ENCODE measurements at regions of chr5 and their contacts with region 1.

Region 1: GRCh38 chr5:76771705-76772405 is 47.0 kb upstream of the F2RL1 start:
- DNase-seq: no peak
- ATAC-seq: no peak
- H3K4me3 ChIP-seq: no peak overlapping the region
- H3K4me3 Mint-ChIP-seq: no peak overlapping the region
- H3K27ac ChIP-seq: no peak overlapping the region
- H3K27ac Mint-ChIP-seq: no peak overlapping the region
- H3K4me1 ChIP-seq: no peaks in the 10 kb centered on the region
- H3K4me1 Mint-ChIP-seq: peaks cover 3% of the 10 kb centered on the region
- H3K27me3 ChIP-seq: no peaks in the 10 kb centered on the region
- H3K27me3 Mint-ChIP-seq: no peaks in the 10 kb centered on the region
- CTCF ChIP-seq: no peak

Region 2: DNA sequence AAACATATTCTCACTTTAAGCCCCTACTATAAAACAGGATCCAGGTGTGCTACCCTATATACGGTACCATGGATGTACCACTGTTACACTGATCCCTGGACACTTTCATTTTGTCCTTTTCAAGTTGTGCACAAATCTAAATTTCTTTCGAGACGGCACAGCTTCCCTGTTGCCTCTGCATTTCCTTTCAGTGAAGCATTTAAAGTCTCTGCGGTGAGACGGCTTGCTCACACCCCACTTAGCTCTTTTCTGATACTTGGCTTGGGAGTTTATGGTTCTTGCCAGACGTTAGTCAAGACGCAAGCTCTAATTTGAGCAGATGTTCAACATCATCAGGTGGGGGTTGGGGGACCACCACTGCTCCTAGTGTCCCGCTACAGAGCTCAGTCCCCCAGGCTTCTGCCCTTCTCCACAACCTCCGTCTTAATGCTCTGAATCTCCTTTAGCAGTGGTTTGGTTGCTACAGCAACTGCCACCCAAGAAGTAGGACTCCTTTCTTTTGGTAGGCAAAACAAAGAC is 164.4 kb before region 1 on chr5:
- CTCF ChIA-PET with region 1: interaction called, 67 read pairs
- POLR2A ChIA-PET with region 1: no interaction called
- intact Hi-C with region 1: no loop called
- DNase-seq: peak in 2 of 9 experiments; percentile 12 to 13
- ATAC-seq: no peak
- H3K4me3 ChIP-seq: no peak overlapping the region
- H3K4me3 Mint-ChIP-seq: no peak overlapping the region
- H3K27ac ChIP-seq: no peak overlapping the region
- H3K27ac Mint-ChIP-seq: peak overlapping the region; percentile 34
- H3K4me1 ChIP-seq: no peaks in the 10 kb centered on the region
- H3K4me1 Mint-ChIP-seq: peaks cover 6% of the 10 kb centered on the region
- H3K27me3 ChIP-seq: no peaks in the 10 kb centered on the region
- H3K27me3 Mint-ChIP-seq: no peaks in the 10 kb centered on the region
- CTCF ChIP-seq: no peak

Region 3: DNA sequence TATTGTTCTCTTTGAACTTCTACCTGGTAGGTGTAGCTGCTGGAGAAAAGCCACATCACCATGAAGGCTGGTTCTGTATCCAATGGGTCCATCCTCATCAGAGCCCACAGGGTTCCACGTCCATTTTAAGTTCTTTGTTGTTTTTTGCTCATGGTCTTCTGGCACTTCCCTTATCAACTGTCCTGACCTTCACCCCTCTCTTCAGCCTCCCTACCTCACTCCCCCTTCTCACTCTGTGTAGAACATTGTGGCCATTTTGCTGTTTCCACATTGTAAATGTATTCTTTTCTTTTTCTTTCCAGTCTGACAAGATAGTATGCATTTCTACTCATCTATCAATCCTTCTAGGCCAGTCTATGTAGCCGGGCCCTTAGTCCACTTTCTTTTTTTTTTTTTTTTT is 104.4 kb before region 1 on chr5:
- CTCF ChIA-PET with region 1: interaction called, 12 read pairs
- POLR2A ChIA-PET with region 1: no interaction called
- intact Hi-C with region 1: no loop called
- DNase-seq: no peak
- ATAC-seq: no peak
- H3K4me3 ChIP-seq: no peak overlapping the region
- H3K4me3 Mint-ChIP-seq: no peak overlapping the region
- H3K27ac ChIP-seq: no peak overlapping the region
- H3K27ac Mint-ChIP-seq: no peak overlapping the region
- H3K4me1 ChIP-seq: no peaks in the 10 kb centered on the region
- H3K4me1 Mint-ChIP-seq: no peaks in the 10 kb centered on the region
- H3K27me3 ChIP-seq: no peaks in the 10 kb centered on the region
- H3K27me3 Mint-ChIP-seq: no peaks in the 10 kb centered on the region
- CTCF ChIP-seq: no peak

Region 4: DNA sequence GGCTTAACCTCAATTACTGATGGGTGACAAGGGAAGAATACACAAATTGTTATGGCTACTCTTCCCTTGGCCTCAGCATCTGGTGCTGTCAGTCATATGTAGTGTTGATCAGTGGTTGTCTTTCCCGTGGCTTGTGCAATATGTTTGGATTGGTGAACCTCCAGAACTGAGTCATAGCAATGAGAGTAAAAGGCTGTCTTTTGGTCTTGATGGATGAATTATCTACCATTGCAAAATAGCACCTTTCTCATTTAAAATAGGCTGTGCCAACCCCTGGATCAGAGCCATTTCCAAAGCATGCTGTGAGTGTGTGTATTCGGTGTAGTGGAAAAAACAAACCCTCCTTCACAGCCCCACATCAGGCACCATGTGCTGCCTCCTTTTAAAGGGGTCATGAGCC is 70.6 kb before region 1 on chr5:
- CTCF ChIA-PET with region 1: interaction called, 13 read pairs
- POLR2A ChIA-PET with region 1: interaction called, 3 read pairs
- intact Hi-C with region 1: no loop called
- DNase-seq: no peak
- ATAC-seq: no peak
- H3K4me3 ChIP-seq: no peak overlapping the region
- H3K4me3 Mint-ChIP-seq: no peak overlapping the region
- H3K27ac ChIP-seq: no peak overlapping the region
- H3K27ac Mint-ChIP-seq: no peak overlapping the region
- H3K4me1 ChIP-seq: no peaks in the 10 kb centered on the region
- H3K4me1 Mint-ChIP-seq: no peaks in the 10 kb centered on the region
- H3K27me3 ChIP-seq: no peaks in the 10 kb centered on the region
- H3K27me3 Mint-ChIP-seq: no peaks in the 10 kb centered on the region
- CTCF ChIP-seq: no peak

Region 5: DNA sequence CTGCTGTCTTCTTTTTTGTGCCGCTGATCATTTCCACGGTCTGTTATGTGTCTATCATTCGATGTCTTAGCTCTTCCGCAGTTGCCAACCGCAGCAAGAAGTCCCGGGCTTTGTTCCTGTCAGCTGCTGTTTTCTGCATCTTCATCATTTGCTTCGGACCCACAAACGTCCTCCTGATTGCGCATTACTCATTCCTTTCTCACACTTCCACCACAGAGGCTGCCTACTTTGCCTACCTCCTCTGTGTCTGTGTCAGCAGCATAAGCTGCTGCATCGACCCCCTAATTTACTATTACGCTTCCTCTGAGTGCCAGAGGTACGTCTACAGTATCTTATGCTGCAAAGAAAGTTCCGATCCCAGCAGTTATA is 38.8 kb before region 1 on chr5:
- CTCF ChIA-PET with region 1: interaction called, 25 read pairs
- POLR2A ChIA-PET with region 1: interaction called, 6 read pairs
- intact Hi-C with region 1: loop called (anchors 1 to 5 kb)
- DNase-seq: peak in 6 of 9 experiments; percentile 42 to 94 (median 75)
- ATAC-seq: peak; percentile 81
- H3K4me3 ChIP-seq: peak overlapping the region in 1 of 2 experiments; percentile 27
- H3K4me3 Mint-ChIP-seq: peak overlapping the region; percentile 68
- H3K27ac ChIP-seq: peak overlapping the region; percentile 65 to 82
- H3K27ac Mint-ChIP-seq: peak overlapping the region; percentile 92
- H3K4me1 ChIP-seq: peaks cover 14% of the 10 kb centered on the region
- H3K4me1 Mint-ChIP-seq: peaks cover 37% of the 10 kb centered on the region
- H3K27me3 ChIP-seq: no peaks in the 10 kb centered on the region
- H3K27me3 Mint-ChIP-seq: no peaks in the 10 kb centered on the region
- CTCF ChIP-seq: no peak

Region 6: DNA sequence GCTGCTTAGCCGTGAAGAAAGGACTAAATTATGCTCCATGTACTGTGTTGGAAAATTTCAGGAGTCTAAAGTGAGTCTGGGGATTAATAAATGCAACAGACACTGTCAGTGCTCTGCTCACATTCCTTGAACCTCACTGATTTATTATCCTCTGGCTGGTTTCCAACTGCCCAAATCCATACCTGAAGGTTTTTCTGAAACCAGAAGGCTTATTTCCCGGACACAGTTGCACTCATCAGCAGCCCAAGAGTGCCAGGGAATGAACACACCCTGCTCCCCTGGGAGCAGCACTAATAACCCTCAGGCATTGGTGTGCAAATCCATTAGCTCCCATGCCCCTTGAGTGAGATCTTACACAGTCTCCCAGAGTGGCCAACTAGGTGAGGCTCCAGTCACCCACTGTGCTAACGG is 17.2 kb before region 1 on chr5:
- CTCF ChIA-PET with region 1: interaction called, 11 read pairs
- POLR2A ChIA-PET with region 1: no interaction called
- intact Hi-C with region 1: no loop called
- DNase-seq: no peak
- ATAC-seq: no peak
- H3K4me3 ChIP-seq: no peak overlapping the region
- H3K4me3 Mint-ChIP-seq: no peak overlapping the region
- H3K27ac ChIP-seq: no peak overlapping the region
- H3K27ac Mint-ChIP-seq: no peak overlapping the region
- H3K4me1 ChIP-seq: no peaks in the 10 kb centered on the region
- H3K4me1 Mint-ChIP-seq: no peaks in the 10 kb centered on the region
- H3K27me3 ChIP-seq: no peaks in the 10 kb centered on the region
- H3K27me3 Mint-ChIP-seq: peaks cover 2% of the 10 kb centered on the region
- CTCF ChIP-seq: no peak